ENCODE measurements at regions of chr19 and their contacts with region 1.

Region 1: GRCh38 chr19:17859533-17860330 is at the start of gene RPL18A:
- DNase-seq: peak; percentile 99
- total RNA-seq, gene RPL18A: 1,284 to 1,308 TPM

Region 2: DNA sequence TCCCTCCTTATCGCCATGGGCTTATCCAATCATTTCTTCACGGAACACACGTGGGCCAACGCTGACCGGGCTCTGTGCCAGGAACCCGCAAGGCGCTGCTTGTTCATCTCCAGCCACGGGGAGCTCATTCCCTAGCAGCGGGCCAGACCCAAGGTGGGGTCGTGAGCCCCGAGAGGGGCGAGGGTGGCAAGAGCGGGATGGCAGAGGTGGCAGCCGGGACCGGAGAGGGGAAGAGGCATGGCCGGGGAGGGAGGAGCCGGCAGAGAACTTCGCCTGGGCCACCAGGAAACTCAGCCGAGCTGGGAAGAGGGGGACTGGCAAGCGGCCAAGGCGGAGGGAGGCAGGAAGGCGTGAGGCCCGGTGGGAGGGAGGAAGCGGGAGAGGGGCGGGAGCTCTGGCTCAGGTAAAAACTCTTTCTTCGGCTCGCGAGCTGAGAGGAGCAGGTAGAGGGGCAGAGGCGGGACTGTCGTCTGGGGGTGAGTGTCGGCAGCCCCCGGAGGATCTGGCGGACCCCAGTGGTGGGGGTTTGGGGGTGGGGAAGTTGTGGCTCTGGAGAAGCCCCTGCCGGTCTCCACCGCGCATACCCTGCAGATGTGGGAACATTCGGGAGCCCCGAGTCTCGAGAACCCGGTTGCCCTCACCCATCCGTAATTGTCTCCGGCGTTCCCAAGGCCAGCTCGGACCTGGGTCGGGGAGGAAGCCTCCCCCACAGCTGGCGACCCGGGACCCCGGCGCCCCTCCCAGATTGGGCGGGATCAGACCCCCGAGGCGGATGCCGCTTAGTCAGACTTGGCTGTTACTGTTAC is 64.8 kb before region 1 on chr19 and contains the start of gene B3GNT3:
- intact Hi-C with region 1: loop called in 1 of 2 experiments (anchors 10 kb)
- DNase-seq: no peak
- total RNA-seq, gene B3GNT3: 0.28 TPM in 1 of 2 donors, not detected in the other

Region 3: GRCh38 chr19:17938092-17938845 is 78.5 kb after region 1 on chr19:
- intact Hi-C with region 1: loop called in 1 of 2 experiments (anchors 5 kb)
- DNase-seq: peak; percentile 96

Region 4: GRCh38 chr19:17985037-17985818 is 125.5 kb after region 1 on chr19:
- intact Hi-C with region 1: loop called in 1 of 2 experiments (anchors 10 kb)
- DNase-seq: no peak